ENCODE measurements at regions of chr6 and their contacts with region 1.

Region 1: GRCh38 chr6:27753668-27754407 is 158.4 kb downstream of the OR2B2 start:
- DNase-seq: peak; percentile 88
- H3K4me3 Mint-ChIP-seq: peak overlapping the region; percentile 77
- H3K27ac Mint-ChIP-seq: peak overlapping the region; percentile 82
- H3K4me1 Mint-ChIP-seq: peaks cover 28% of the 10 kb centered on the region
- H3K27me3 Mint-ChIP-seq: no peaks in the 10 kb centered on the region

Region 2: DNA sequence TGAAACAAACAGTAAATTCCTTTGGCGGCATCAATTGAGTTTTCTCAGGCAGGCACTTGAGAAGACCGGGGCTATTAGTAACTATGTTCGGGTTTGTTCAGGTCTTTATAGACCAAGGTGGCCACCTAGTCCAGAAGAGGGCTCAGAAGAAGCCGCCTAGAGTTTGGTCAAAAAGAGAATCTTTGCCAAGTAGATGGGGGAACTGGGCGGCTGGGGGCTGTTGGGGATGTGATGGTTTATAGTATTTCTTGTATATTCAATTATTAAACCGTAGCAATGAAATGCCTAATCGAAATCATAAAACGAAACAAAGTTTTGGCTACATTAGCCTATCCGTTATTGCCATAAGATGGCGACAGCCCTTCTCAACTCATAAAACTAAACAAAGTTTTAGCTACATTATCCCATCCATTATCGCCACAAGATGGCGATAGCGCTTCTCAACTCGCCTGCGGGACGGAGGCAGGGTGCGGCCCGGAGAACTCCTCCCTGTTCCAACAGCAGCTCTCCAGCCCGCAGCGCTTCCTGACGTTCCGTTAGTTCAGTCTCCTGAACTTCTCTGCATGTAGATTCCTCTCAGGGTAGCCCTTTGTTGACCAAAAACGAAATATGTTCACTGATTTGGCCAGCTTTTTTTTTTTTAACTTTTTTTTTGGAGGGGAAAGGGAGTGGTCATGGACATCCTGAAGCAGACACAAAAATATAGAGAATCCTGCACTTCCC is 626.9 kb before region 1 on chr6:
- CTCF ChIA-PET with region 1: interaction called, 3 read pairs
- intact Hi-C with region 1: loop called (anchors 2 kb)
- DNase-seq: peak; percentile 92
- H3K4me3 Mint-ChIP-seq: peak overlapping the region; percentile 56
- H3K27ac Mint-ChIP-seq: peak overlapping the region; percentile 69
- H3K4me1 Mint-ChIP-seq: peaks cover 13% of the 10 kb centered on the region
- H3K27me3 Mint-ChIP-seq: no peaks in the 10 kb centered on the region

Region 3: GRCh38 chr6:27312146-27312949 is 441.5 kb before region 1 on chr6 and contains the start of gene POM121L2:
- CTCF ChIA-PET with region 1: interaction called, 6 read pairs
- intact Hi-C with region 1: loop called (anchors 1 kb)
- DNase-seq: peak; percentile 79
- H3K4me3 Mint-ChIP-seq: peak within 1 kb of the TSS; percentile 72
- H3K27ac Mint-ChIP-seq: no peak within 1 kb of the TSS
- H3K4me1 Mint-ChIP-seq: peaks cover 10% of the 10 kb centered on the region
- H3K27me3 Mint-ChIP-seq: peaks cover 62% of the 10 kb centered on the region
- total RNA-seq, gene POM121L2: not detected

Region 4: GRCh38 chr6:27503436-27504030 is 250.3 kb before region 1 on chr6:
- CTCF ChIA-PET with region 1: no interaction called
- intact Hi-C with region 1: loop called (anchors 1 kb)
- DNase-seq: peak; percentile 88
- H3K4me3 Mint-ChIP-seq: peak overlapping the region; percentile 90
- H3K27ac Mint-ChIP-seq: peak overlapping the region; percentile 86
- H3K4me1 Mint-ChIP-seq: peaks cover 24% of the 10 kb centered on the region
- H3K27me3 Mint-ChIP-seq: peaks cover 1% of the 10 kb centered on the region

Region 5: GRCh38 chr6:27687154-27688013 is 66.5 kb before region 1 on chr6:
- CTCF ChIA-PET with region 1: interaction called, 8 read pairs
- intact Hi-C with region 1: loop called (anchors 1 kb)
- DNase-seq: peak; percentile 90
- H3K4me3 Mint-ChIP-seq: peak overlapping the region; percentile 93
- H3K27ac Mint-ChIP-seq: peak overlapping the region; percentile 94
- H3K4me1 Mint-ChIP-seq: peaks cover 18% of the 10 kb centered on the region
- H3K27me3 Mint-ChIP-seq: peaks cover 26% of the 10 kb centered on the region

Region 6: DNA sequence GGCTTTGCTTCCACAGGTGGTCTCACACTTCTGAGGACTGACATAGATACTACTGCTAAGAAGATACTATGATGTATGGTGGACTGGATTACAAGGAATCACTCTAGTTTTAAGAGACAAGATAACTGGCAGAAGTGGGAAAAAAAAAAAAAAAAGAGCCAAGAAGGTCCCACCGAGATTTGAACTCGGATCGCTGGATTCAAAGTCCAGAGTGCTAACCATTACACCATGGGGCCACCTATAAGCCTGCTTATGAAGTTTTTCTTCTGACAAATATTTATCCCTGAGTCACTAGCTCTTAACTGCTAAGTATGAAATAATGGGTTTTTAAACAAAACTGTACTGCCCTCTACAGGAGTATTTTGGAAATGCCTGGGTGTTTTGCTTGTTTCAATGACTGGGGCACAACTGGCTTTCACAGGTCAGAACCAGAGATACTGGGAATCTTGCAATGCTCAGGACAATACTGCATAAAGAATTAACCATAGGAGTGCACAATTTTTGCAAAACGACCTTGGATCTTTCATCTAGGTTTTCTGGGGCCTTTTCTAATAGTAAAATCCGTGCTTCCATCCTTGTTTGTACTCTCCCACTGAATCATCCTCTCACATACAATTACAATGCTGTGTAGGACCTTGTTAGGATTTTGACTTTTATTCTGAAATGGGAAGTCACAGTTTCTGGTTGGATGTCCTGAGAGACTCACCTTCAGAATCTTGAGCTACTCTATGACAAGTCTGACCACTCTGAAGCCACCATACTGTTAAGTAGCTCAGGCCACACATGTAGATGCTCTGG is 42.1 kb after region 1 on chr6:
- CTCF ChIA-PET with region 1: interaction called, 9 read pairs
- intact Hi-C with region 1: loop called (anchors 1 kb)
- DNase-seq: peak; percentile 59
- H3K4me3 Mint-ChIP-seq: no peak overlapping the region
- H3K27ac Mint-ChIP-seq: no peak overlapping the region
- H3K4me1 Mint-ChIP-seq: peaks cover 16% of the 10 kb centered on the region
- H3K27me3 Mint-ChIP-seq: peaks cover 5% of the 10 kb centered on the region